HEK293 (cell line): ENCODE measurements at regions of chr1 and their contacts with region 1.

Region 1: DNA sequence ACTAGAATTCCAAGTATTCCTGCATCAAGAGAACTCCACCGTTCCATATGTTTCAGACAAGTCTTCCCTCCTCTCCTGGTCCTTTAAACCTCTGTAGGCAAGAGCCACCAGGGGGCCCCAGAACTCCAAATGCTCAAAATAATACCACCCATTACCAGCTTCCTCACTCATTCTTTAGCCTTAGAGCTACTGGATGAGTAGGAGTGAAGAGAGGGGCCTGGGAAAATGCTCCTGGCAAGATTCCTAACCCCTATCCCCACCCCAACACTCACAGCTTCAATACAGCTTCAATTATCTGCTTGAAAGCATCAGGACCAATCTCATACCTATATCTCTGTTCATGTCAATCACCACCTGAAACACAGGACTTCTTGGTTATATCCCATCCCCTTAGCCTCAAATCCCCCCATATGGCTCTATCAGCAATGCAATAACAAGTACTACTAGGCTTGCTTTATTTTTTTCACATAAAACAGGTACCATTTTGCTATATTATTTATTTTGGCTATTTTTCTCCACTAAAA is 9.7 kb downstream of the TOR1AIP2 start:
- H3K4me3 ChIP-seq: no peak overlapping the region
- H3K27ac ChIP-seq: no peak overlapping the region
- H3K4me1 ChIP-seq: no peaks in the 10 kb centered on the region
- CTCF ChIP-seq: peak; percentile 43

Region 2: DNA sequence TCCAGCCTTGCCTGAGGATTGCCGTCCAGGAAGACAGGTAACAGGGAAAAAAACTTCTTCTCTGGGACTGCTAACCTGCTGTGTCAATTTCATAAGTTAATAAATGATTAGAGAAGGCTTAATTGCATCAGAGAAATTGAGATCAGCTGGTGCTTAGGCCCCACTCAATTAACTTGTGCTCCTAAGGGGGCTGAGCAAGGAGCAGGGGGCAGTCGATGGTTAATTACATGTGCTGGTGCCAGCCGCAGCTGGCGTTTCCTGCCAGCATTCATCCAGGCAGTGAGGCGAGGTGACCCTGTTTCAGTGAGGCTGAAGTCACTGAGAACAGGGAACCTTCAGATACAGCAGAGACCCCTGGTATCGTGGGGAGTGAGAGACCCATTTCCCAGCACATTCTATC is 64.8 kb before region 1 on chr1:
- CTCF ChIA-PET with region 1: no interaction called
- POLR2A ChIA-PET with region 1: no interaction called
- H3K4me3 ChIP-seq: no peak overlapping the region
- H3K27ac ChIP-seq: no peak overlapping the region
- H3K4me1 ChIP-seq: no peaks in the 10 kb centered on the region
- CTCF ChIP-seq: no peak

Region 3: GRCh38 chr1:179853102-179853501 is 14.8 kb before region 1 on chr1:
- CTCF ChIA-PET with region 1: interaction called, 10 read pairs
- POLR2A ChIA-PET with region 1: no interaction called
- H3K4me3 ChIP-seq: no peak overlapping the region
- H3K27ac ChIP-seq: no peak overlapping the region
- H3K4me1 ChIP-seq: no peaks in the 10 kb centered on the region
- CTCF ChIP-seq: no peak

Region 4: GRCh38 chr1:180168786-180169639 is 301.1 kb after region 1 on chr1:
- CTCF ChIA-PET with region 1: interaction called, 31 read pairs
- POLR2A ChIA-PET with region 1: no interaction called
- H3K4me3 ChIP-seq: no peak overlapping the region
- H3K27ac ChIP-seq: no peak overlapping the region
- H3K4me1 ChIP-seq: peaks cover 11% of the 10 kb centered on the region
- CTCF ChIP-seq: peak; percentile 49; the same call in 1 of the 2 replicates

Region 5: GRCh38 chr1:180178511-180179161 is 310.8 kb after region 1 on chr1:
- CTCF ChIA-PET with region 1: interaction called, 61 read pairs
- POLR2A ChIA-PET with region 1: no interaction called
- H3K4me3 ChIP-seq: no peak overlapping the region
- H3K27ac ChIP-seq: no peak overlapping the region
- H3K4me1 ChIP-seq: no peaks in the 10 kb centered on the region
- CTCF ChIP-seq: peak; percentile 55